ENCODE measurements at regions of chr12 and their contacts with region 1.

Region 1: DNA sequence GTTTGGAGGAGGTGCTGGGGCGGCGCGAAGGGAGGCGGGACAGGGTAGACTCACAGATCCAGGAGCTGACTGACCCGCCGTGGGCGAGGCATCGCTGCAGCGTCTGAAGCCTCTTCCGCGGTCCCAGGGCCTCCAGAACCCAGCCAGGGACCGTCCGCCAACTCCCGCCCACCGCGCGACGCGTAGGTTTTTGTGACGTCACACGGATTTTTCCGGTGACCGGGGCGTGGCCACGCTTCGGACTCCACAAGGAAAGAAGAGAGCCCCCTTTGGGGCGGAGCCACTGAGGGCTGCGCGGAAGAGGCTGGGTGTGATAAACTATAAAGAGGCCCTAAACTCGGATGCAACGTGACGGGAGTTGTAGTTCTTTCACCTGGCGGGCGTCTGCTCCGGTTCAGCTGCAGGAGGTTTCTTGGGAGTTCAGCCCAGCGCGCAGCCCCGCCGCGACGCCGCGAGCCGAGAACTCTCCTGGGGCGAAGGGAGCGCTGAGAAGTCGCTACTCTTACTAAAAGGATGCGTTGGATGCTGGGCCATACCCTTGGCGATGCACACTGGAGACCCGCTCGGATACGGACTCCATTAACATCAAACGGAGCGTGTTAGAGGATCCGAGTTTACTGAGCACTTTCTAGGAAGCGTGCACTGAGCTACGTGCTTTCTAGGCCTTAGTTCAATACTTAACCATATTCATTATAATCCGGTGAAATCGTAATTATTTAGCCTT is at the start of gene AMN1:
- DNase-seq: peak; percentile 99
- H3K4me3 Mint-ChIP-seq: peak within 1 kb of the TSS; percentile 95
- H3K27ac Mint-ChIP-seq: peak within 1 kb of the TSS; percentile 97
- H3K4me1 Mint-ChIP-seq: peaks cover 38% of the 10 kb centered on the region
- H3K27me3 Mint-ChIP-seq: no peaks in the 10 kb centered on the region
- total RNA-seq, gene AMN1: 6.6 to 8.0 TPM

Region 2: DNA sequence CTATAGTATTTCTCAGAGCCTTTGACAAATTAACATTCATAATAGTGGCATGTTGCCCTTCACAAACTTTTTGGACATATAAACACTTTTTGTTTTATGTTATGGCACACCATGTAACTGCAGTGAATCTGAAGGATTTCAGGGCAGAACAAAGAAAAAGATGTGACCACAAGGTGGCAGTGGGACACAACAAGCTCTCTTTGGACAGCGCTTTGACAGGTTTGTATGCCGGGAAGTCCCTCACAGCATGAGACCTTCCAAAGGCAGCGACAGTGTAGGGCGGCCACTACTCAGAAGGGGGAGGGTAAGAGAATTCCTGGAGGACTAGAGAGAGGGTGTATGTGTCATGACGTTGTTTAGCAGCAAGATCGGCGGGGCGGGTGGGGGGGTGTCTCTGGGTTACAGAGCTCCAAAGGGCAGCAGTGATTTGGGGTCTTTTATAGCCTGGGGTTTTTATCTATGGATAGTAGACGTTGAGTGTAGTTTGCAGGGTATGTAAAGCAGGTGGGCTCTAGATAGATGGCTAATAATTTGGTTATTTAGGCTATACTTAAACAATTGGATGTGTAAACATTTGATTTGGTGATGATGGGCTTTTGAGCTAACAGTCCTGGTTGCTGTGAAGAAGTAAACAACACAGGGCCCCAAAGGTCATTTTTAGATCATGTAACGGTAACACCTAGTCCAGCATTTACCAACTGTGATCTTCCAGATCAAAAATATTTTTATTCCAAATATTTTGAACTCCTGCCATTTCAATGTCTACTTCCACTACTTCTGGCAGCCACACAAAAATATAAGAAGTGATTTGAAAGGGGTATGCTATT is 46.7 kb before region 1 on chr12:
- CTCF ChIA-PET with region 1: no interaction called
- intact Hi-C with region 1: loop called (anchors 1 kb)
- DNase-seq: peak; percentile 83
- H3K4me3 Mint-ChIP-seq: no peak overlapping the region
- H3K27ac Mint-ChIP-seq: peak overlapping the region; percentile 84
- H3K4me1 Mint-ChIP-seq: peaks cover 5% of the 10 kb centered on the region
- H3K27me3 Mint-ChIP-seq: no peaks in the 10 kb centered on the region

Region 3: GRCh38 chr12:31797230-31797872 is 68.3 kb after region 1 on chr12:
- CTCF ChIA-PET with region 1: no interaction called
- intact Hi-C with region 1: loop called (anchors 2 kb)
- DNase-seq: peak; percentile 55
- H3K4me3 Mint-ChIP-seq: peak overlapping the region; percentile 16
- H3K27ac Mint-ChIP-seq: peak overlapping the region; percentile 85
- H3K4me1 Mint-ChIP-seq: peaks cover 25% of the 10 kb centered on the region
- H3K27me3 Mint-ChIP-seq: no peaks in the 10 kb centered on the region

Region 4: DNA sequence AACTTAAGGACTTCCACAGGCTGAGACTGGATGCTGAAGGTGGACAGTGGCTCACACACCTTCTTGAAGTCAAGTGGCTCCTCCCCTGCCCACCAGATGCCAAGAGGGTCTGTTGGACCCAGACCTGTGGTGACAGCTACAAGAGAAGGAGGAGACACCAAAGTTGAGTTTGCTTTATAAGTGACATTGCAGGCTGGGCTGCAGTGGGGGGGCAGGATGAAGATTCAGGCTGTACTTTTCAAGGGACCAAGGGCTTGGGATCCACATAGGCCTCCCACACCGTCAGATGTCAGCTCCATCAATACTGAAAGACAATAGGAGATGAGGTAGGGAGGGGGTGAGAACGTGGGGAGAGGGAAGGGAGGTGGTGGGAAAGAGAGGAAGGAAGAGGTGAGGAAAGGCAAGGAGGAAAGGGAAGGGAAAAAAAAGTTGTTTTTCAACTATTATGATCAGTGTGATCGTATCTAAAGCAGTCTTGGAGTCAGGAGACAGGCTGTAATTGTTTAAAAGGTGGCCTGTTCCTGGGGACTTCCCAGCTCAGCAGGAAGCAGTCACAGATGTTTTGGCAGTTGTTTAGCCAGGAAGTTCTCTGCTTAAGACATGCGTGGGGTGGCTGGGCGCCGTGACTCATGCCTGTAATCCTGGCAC is 146.0 kb after region 1 on chr12:
- CTCF ChIA-PET with region 1: interaction called, 3 read pairs
- intact Hi-C with region 1: loop called (anchors 1 kb)
- DNase-seq: peak; percentile 90
- H3K4me3 Mint-ChIP-seq: peak overlapping the region; percentile 73
- H3K27ac Mint-ChIP-seq: peak overlapping the region; percentile 100
- H3K4me1 Mint-ChIP-seq: peaks cover 37% of the 10 kb centered on the region
- H3K27me3 Mint-ChIP-seq: no peaks in the 10 kb centered on the region

Region 5: GRCh38 chr12:32005496-32006125 is 276.5 kb after region 1 on chr12:
- CTCF ChIA-PET with region 1: no interaction called
- intact Hi-C with region 1: no loop called
- DNase-seq: no peak
- H3K4me3 Mint-ChIP-seq: no peak overlapping the region
- H3K27ac Mint-ChIP-seq: no peak overlapping the region
- H3K4me1 Mint-ChIP-seq: peaks cover 4% of the 10 kb centered on the region
- H3K27me3 Mint-ChIP-seq: no peaks in the 10 kb centered on the region

Region 6: GRCh38 chr12:32217354-32218310 is 488.6 kb after region 1 on chr12:
- CTCF ChIA-PET with region 1: no interaction called
- intact Hi-C with region 1: no loop called
- DNase-seq: no peak
- H3K4me3 Mint-ChIP-seq: no peak overlapping the region
- H3K27ac Mint-ChIP-seq: no peak overlapping the region
- H3K4me1 Mint-ChIP-seq: peaks cover 3% of the 10 kb centered on the region
- H3K27me3 Mint-ChIP-seq: no peaks in the 10 kb centered on the region